Endothelial cell of umbilical vein (primary cell): ENCODE measurements at regions of chr13 and their contacts with region 1.

Region 1: DNA sequence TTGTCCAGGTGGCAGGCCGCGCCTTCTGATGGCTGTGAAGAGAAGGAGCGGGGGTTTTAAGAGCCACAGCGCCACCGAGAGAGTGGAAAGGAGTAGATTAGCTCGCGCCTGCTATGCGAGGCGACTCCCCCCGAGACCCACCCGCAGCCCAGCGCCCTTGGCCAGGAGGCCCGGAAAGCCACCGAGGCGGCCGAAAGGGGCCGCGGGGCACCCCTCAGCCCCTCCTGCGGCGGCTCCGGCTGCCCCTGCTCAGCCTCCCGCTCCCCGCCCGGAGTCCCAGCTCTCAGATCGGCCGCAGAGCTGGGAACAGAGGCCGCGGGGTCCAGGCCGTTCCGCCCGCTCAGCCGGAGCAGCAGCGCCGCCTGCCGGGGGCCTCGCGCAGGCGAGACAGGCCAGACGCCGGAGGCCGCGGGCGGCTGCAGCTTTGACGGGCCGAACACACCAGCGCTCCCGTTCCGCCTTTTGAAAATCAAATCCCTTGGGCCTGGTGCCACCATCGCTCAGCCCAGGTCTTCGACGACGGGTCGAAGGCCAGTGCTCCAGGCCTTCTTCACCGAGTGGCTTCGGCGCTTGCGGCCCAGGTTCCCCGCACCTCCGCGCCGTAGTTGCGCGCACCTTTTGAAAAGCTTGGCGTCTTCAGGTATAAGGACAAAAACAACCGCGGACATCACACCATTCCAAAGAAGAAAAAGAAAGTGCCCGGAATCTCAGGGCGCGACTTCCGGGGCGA is 15.3 kb downstream of the CDX2 start:
- DNase-seq: peak; percentile 64
- H3K4me3 ChIP-seq: peak overlapping the region; percentile 27 to 52 (median 32)
- H3K27ac ChIP-seq: no peak overlapping the region
- H3K4me1 ChIP-seq: peaks cover 15% of the 10 kb centered on the region
- H3K27me3 ChIP-seq: peaks cover 36 to 67% of the 10 kb centered on the region in 2 experiments
- CTCF ChIP-seq: peak; percentile 89 to 95
- POLR2A ChIP-seq: no peak

Region 2: GRCh38 chr13:27396252-27396846 is 557.5 kb before region 1 on chr13:
- CTCF ChIA-PET with region 1: no interaction called
- POLR2A ChIA-PET with region 1: no interaction called
- dilution Hi-C with region 1: no loop called
- intact Hi-C with region 1: no loop called
- DNase-seq: no peak
- H3K4me3 ChIP-seq: no peak overlapping the region
- H3K27ac ChIP-seq: no peak overlapping the region
- H3K4me1 ChIP-seq: no peaks in the 10 kb centered on the region
- H3K27me3 ChIP-seq: peaks cover 4 to 13% of the 10 kb centered on the region in 2 experiments
- CTCF ChIP-seq: no peak
- POLR2A ChIP-seq: no peak

Region 3: DNA sequence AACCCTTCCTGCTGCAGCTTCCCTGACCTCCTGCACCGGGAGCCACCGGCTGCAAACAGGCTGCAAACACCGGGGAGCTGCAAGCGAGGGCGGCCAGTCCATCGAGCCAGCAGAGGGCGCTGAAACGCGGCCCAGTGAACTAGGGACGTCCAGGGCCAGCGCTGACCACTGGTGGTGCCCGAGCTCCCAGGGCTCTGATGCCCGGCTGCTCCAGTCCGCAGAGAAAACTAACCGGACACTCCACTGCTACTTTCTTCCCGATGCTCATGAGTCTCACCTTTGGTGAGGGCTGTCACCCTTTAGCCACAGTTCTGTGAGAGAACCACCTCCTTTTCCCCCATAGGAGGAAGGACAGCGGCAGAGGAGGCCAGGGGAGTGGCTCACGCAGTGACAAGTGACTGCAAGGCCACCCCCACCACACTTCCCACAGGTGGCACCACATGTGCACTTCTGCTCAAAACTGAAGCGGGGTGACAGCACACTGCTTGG is 420.6 kb before region 1 on chr13:
- CTCF ChIA-PET with region 1: interaction called, 28 read pairs
- POLR2A ChIA-PET with region 1: no interaction called
- dilution Hi-C with region 1: no loop called
- intact Hi-C with region 1: loop called (anchors 5 kb)
- DNase-seq: peak; percentile 69
- H3K4me3 ChIP-seq: no peak overlapping the region
- H3K27ac ChIP-seq: no peak overlapping the region
- H3K4me1 ChIP-seq: no peaks in the 10 kb centered on the region
- H3K27me3 ChIP-seq: no peaks in the 10 kb centered on the region
- CTCF ChIP-seq: peak; percentile 95 to 99
- POLR2A ChIP-seq: no peak

Region 4: DNA sequence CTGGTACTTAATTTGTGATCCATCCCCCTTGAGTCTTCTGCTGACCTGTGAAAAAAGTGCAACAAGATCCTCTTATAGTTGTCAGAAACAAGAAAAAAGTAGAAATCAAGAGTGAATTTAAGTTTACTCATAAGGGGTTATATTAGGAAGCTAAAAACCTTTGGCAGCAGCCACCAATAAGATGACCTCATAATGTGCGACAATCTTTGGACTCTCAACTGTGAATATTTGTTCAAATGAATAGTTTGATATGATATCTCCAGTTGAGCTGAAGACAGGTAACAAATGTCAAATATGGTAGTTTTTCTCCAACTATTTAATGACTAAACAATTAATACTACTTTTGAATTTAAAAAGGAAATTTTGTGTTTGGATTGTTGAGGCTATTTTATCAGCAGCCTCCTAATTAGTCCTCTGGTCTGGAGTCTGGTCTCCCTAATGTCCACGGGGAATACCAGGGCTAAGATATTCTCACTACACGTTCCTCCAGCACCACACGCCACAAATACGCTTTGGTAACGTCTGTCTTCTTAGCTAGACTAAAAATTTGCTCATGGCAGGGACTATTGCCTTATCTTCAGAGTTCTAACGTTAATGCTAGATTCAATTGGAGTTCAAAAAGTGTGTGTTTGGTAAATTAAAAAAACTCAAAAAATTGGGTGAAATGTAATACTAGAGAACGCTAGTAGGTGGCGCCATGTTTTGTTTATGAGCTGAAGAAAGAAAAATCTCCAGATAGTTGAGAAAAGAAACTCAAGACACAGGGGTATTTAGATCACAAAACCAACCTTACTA is 85.0 kb before region 1 on chr13:
- CTCF ChIA-PET with region 1: interaction called, 73 read pairs
- POLR2A ChIA-PET with region 1: no interaction called
- dilution Hi-C with region 1: no loop called
- intact Hi-C with region 1: loop called (anchors 1 kb)
- DNase-seq: peak; percentile 29
- H3K4me3 ChIP-seq: no peak overlapping the region
- H3K27ac ChIP-seq: no peak overlapping the region
- H3K4me1 ChIP-seq: no peaks in the 10 kb centered on the region
- H3K27me3 ChIP-seq: peaks cover 2 to 16% of the 10 kb centered on the region in 2 experiments
- CTCF ChIP-seq: peak; percentile 28 to 37
- POLR2A ChIP-seq: no peak

Region 5: GRCh38 chr13:27905650-27906049 is 48.2 kb before region 1 on chr13:
- CTCF ChIA-PET with region 1: no interaction called
- POLR2A ChIA-PET with region 1: no interaction called
- dilution Hi-C with region 1: no loop called
- intact Hi-C with region 1: no loop called
- DNase-seq: no peak
- H3K4me3 ChIP-seq: no peak overlapping the region
- H3K27ac ChIP-seq: no peak overlapping the region
- H3K4me1 ChIP-seq: no peaks in the 10 kb centered on the region
- H3K27me3 ChIP-seq: peaks cover 7 to 12% of the 10 kb centered on the region in 2 experiments
- CTCF ChIP-seq: no peak
- POLR2A ChIP-seq: no peak

Region 6: GRCh38 chr13:27971236-27971645 is 17.4 kb after region 1 on chr13:
- CTCF ChIA-PET with region 1: interaction called, 11 read pairs
- POLR2A ChIA-PET with region 1: no interaction called
- dilution Hi-C with region 1: no loop called
- intact Hi-C with region 1: no loop called
- DNase-seq: no peak
- H3K4me3 ChIP-seq: no peak overlapping the region
- H3K27ac ChIP-seq: no peak overlapping the region
- H3K4me1 ChIP-seq: no peaks in the 10 kb centered on the region
- H3K27me3 ChIP-seq: peaks cover 87 to 99% of the 10 kb centered on the region in 2 experiments
- CTCF ChIP-seq: no peak
- POLR2A ChIP-seq: no peak